ENCODE measurements at regions of chr1 and their contacts with region 1.

Region 1: DNA sequence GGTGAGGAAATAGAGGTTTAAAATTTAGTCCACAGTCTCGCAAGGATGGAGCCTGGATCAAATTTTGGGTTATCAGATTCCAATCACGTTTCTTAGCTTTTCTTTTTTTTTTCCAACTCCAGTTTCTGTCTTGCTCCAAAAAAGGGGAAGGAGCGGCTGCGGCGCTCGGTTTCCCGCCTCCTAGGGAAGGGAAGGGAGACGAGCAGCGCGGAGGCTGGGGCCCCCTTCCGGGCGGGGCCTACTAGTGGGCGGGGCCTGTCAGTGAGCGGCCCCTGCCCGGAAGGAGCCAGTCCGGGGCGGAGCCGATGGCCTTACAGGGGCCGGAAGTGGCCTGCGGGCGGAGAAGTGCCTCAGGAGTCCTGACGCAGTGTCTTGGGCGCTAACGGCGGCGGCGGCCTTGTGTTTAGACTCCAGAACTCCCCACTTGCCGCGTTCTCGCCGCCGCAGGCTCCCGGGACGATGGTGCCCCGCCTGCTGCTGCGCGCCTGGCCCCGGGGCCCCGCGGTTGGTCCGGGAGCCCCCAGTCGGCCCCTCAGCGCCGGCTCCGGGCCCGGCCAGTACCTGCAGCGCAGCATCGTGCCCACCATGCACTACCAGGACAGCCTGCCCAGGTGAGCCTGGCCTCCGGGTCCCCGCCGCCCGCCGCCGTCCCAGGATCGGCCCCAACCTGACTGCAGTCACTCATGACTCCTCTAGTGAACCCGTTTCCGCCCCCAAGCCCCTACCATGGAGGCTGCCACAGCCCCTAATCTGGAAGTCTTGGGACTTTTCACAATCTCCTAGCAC is at the start of gene CPT2:
- H3K4me3 Mint-ChIP-seq: peak within 1 kb of the TSS; percentile 91
- H3K27ac Mint-ChIP-seq: peak within 1 kb of the TSS; percentile 92
- H3K4me1 Mint-ChIP-seq: peaks cover 26% of the 10 kb centered on the region
- H3K27me3 Mint-ChIP-seq: no peaks in the 10 kb centered on the region

Region 2: DNA sequence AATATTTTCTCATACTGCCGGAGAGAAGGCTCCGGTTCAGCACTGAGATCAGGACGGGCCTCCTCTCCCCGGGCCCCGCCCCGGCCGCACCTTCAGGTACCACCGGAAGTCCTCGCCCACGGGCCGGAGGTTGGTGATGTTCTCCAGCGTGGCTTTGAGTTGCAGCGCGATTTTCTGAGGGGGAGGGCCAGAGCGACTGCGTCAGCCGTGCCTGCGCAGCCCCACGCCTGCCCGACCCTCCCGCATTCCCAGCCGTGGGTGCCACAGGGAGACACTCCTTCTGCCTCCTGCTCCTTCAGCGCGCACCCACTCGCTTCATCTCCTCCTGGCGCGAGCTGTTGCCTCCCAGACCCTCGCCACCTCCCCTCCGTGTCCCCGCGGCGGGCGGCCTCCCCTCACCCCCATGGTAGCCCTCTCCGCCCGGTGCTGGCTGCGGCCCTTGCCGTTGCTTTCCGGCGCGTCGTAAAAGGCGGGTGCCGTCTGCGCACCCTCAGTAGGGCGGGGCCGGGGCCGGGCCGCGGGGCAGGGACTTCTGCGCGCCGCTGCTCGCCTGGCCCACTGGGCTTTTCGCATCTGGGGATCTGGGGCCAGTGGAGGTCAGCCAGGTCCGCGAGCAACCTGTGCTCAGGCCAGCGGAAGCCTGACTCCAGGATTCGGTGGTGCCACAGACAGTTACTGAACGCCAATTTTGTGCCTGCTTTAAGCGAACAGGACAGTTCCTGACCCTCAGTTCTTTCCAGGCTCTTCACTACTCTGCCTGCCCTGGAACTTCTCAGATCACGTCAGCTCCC is 23.7 kb after region 1 on chr1 and contains the start of gene CZIB:
- intact Hi-C with region 1: loop called (anchors 2 kb)
- H3K4me3 Mint-ChIP-seq: peak within 1 kb of the TSS; percentile 92
- H3K27ac Mint-ChIP-seq: peak within 1 kb of the TSS; percentile 97
- H3K4me1 Mint-ChIP-seq: peaks cover 30% of the 10 kb centered on the region
- H3K27me3 Mint-ChIP-seq: no peaks in the 10 kb centered on the region

Measured in dendritic cell treated with granulocyte-macrophage colony-stimulating factor and Interleukin-4, amounts not matched to agents 40 ng/mL and 50 ng/mL, for 4 days (primary cell).